ENCODE measurements at regions of chr5 and their contacts with region 1.

Region 1: GRCh38 chr5:72523960-72524582 is 16.9 kb upstream of the ZNF366 start:
- DNase-seq: no peak
- H3K4me3 ChIP-seq: no peak overlapping the region
- H3K27ac ChIP-seq: no peak overlapping the region
- H3K4me1 ChIP-seq: no peaks in the 10 kb centered on the region
- H3K27me3 ChIP-seq: no peaks in the 10 kb centered on the region
- CTCF ChIP-seq: peak in 2 of 3 experiments; percentile 61 to 64; a peak in 3 of 4 replicates
- EP300 ChIP-seq: no peak
- POLR2A ChIP-seq: no peak
- RAD21 ChIP-seq: peak; percentile 90

Region 2: DNA sequence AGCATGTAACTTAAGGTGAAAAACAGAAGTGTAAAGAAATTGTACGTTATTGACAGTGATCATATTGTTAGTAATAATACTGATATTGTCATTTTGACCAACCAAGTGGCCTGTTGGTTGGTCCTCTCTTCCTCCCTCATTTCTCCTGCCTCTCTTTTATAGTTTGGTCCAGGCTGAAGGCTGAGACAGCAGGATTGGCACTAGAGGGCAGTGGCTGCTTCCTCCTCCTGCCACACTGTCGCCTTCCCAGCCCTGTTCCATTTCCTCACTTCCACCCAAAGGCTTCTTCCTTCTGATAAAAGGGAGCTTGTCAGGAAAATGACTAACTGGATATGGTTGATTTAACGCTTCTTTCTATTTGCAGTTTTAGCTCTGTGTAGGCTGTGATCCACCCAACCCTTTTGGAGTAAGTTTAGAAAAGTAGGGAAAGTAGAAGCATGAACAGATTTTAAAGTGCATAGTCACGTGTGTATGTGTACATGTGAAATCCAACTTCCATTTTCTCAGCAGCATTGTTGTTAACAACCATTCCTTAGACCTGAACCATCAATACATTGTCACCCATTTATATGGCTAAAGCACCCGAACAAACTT is 168.3 kb before region 1 on chr5:
- CTCF ChIA-PET with region 1: interaction called, 22 read pairs
- POLR2A ChIA-PET with region 1: no interaction called
- DNase-seq: no peak
- H3K4me3 ChIP-seq: no peak overlapping the region
- H3K27ac ChIP-seq: no peak overlapping the region
- H3K4me1 ChIP-seq: no peaks in the 10 kb centered on the region
- H3K27me3 ChIP-seq: no peaks in the 10 kb centered on the region
- CTCF ChIP-seq: peak; percentile 53 to 83 (median 67)
- EP300 ChIP-seq: no peak
- POLR2A ChIP-seq: no peak
- RAD21 ChIP-seq: peak; percentile 75 to 82

Region 3: DNA sequence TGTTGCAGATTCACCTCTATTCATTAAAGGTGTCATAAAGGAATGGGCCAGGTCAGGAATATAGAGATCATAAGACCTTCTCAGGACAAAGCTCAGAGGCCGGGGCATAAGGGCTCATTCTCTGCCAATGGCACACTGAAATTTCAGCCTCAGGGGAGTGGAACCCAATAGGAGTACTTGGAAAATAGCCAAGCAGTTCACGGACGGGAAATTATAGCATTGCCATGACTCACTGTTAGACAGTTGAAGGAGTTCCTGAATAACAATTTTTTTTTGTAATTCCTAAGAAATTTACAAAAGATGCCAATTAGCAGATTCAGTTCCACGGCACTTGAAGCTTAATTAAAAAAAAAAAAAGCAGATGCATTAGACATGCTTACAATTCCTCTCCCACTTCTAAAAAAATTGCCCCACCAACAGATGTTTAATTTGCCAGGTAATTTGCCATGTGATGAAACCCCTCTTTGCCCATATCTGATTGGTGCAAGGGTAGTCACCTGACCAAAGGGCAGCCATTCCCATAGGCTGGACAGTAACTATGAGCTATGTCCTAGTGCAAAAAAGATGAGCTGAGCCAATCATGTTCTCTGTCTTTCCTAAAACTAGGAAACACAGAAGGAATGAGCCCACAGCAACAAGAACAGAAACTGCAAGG is 145.3 kb before region 1 on chr5:
- CTCF ChIA-PET with region 1: interaction called, 15 read pairs
- POLR2A ChIA-PET with region 1: no interaction called
- DNase-seq: no peak
- H3K4me3 ChIP-seq: no peak overlapping the region
- H3K27ac ChIP-seq: no peak overlapping the region
- H3K4me1 ChIP-seq: no peaks in the 10 kb centered on the region
- H3K27me3 ChIP-seq: no peaks in the 10 kb centered on the region
- CTCF ChIP-seq: no peak
- EP300 ChIP-seq: no peak
- POLR2A ChIP-seq: no peak
- RAD21 ChIP-seq: no peak

Region 4: DNA sequence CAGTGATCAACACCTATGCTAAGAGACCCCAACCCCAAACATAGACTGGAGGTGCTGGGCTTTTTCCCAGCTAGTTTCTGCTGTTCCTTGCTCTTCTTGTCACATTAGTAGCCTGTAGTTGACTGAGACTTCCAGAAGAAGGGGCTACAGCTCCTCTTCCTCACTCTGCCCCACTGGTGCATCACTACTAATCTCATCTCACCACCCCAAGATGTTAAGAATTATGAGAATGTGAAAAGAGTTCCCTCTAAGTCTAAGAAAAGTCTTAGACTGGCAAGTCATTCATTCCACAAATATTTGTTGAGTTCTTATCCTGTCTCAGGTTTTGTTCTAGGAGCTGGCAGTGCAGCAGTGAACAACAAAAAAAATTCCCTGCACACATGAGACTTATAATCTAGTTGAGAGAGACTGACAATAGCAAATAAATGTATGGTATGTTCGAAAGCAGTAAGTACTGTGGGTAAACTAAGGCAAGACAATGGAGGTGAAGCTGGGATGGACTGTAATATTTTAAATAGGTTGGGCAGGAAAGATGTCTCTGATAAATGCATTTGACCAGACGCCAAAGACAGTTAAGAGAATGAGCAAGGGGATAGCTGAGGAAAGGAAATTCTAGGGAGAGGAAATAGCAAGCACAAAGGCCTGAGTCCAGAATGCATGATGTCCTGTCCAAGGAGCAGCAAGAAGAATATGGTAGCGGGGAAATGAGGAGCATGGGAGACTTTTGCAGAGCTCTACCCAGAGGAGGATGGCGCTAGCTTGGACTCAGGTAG is 111.6 kb before region 1 on chr5:
- CTCF ChIA-PET with region 1: interaction called, 12 read pairs
- POLR2A ChIA-PET with region 1: no interaction called
- DNase-seq: no peak
- H3K4me3 ChIP-seq: no peak overlapping the region
- H3K27ac ChIP-seq: no peak overlapping the region
- H3K4me1 ChIP-seq: no peaks in the 10 kb centered on the region
- H3K27me3 ChIP-seq: no peaks in the 10 kb centered on the region
- CTCF ChIP-seq: peak in 2 of 3 experiments; percentile 20 to 38; a peak in 2 of 4 replicates
- EP300 ChIP-seq: no peak
- POLR2A ChIP-seq: no peak
- RAD21 ChIP-seq: peak; percentile 48 to 57

Region 5: DNA sequence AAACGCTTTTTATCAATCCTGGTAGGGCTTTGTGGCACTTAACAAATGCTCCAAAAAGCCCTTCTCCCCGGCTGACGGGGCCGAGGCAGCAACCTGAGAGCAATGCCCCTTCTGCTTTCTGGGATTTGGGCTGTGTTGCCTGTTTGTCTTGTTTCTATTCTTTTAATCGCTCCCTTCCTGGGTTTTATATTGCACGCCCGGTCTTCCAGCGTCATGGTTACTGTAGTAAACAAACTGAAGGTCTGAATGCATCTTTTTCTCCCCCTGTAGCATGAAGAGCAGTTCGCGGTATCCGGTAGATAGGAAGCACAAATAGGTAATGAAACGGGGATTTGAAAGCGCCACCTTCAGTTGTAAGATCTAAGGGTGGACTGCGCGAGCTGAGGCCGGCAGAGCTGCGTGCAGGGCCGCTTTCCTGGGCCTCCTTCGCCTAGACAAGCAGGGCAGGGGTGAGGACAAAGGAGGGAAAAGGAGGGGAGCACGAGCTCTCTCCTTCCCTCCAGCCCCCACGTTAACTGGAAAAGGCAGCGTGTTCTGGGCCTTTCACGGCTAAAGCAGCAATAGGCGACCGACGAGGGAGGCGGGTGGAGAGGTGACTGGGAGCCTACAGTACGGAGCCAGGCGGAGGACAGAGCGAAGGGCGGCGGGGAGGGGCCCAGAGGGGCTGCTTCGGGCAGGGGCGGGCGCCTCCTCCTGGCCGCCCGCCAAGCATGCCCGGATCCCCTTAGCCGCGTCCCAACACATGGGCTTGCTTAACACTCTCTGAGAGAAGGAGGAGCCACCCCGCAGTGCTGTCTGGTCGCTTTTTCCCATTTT is 32.5 kb after region 1 on chr5:
- CTCF ChIA-PET with region 1: interaction called, 13 read pairs
- POLR2A ChIA-PET with region 1: no interaction called
- DNase-seq: peak; percentile 61 to 89
- H3K4me3 ChIP-seq: peak overlapping the region; percentile 40 to 56 (median 42); a peak in 6 of 8 replicates
- H3K27ac ChIP-seq: peak overlapping the region; percentile 87
- H3K4me1 ChIP-seq: peaks cover 7 to 30% (median 18%) of the 10 kb centered on the region in 4 experiments
- H3K27me3 ChIP-seq: no peaks in the 10 kb centered on the region
- CTCF ChIP-seq: peak; percentile 54 to 62 (median 58)
- EP300 ChIP-seq: no peak
- POLR2A ChIP-seq: peak in 1 of 2 experiments; percentile 83; a peak in 2 of 3 replicates
- RAD21 ChIP-seq: peak; percentile 49 to 62

Region 6: DNA sequence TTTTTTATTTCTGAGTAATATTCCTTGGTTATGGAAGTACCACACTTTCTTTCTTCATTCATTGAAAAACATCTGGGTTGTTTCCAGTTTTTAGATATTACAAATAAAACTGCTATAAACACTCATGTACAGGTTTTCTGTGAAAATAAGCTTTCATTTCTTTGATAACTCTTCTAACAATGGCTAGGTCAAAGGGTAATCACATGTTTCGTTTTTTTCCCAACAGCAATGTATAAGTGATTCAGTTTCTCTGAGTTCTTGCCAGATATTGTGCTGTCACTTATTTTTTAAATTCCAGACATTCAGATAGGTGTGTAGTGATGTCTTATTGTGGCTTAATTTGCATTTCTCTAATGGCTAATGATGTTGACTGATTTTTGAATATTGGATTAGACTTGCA is 275.6 kb after region 1 on chr5:
- CTCF ChIA-PET with region 1: no interaction called
- POLR2A ChIA-PET with region 1: no interaction called
- DNase-seq: no peak
- H3K4me3 ChIP-seq: no peak overlapping the region
- H3K27ac ChIP-seq: no peak overlapping the region
- H3K4me1 ChIP-seq: no peaks in the 10 kb centered on the region
- H3K27me3 ChIP-seq: no peaks in the 10 kb centered on the region
- CTCF ChIP-seq: no peak
- EP300 ChIP-seq: no peak
- POLR2A ChIP-seq: no peak
- RAD21 ChIP-seq: no peak

Measured in H1 (cell line).